ENCODE measurements at regions of chr12 and their contacts with region 1.

Region 1: GRCh38 chr12:118135788-118136558 is at the start of gene PEBP1:
- DNase-seq: peak; percentile 60 to 88
- H3K4me3 ChIP-seq: peak within 1 kb of the TSS; percentile 86 to 97 (median 91)
- H3K27ac ChIP-seq: peak within 1 kb of the TSS; percentile 78
- H3K4me1 ChIP-seq: peaks cover 0 to 3% (median under 1%) of the 10 kb centered on the region in 4 experiments; a peak in 4 of 7 replicates
- H3K27me3 ChIP-seq: no peaks in the 10 kb centered on the region
- CTCF ChIP-seq: 0 out of 4 replicates have a peak, but pooled peaks of 1 of the 3 experiments have one; percentile 6
- EP300 ChIP-seq: no peak
- POLR2A ChIP-seq: peak; percentile 50 to 68
- RAD21 ChIP-seq: no peak
- total RNA-seq, gene PEBP1: 444 and 458 TPM in 2 replicates

Region 2: DNA sequence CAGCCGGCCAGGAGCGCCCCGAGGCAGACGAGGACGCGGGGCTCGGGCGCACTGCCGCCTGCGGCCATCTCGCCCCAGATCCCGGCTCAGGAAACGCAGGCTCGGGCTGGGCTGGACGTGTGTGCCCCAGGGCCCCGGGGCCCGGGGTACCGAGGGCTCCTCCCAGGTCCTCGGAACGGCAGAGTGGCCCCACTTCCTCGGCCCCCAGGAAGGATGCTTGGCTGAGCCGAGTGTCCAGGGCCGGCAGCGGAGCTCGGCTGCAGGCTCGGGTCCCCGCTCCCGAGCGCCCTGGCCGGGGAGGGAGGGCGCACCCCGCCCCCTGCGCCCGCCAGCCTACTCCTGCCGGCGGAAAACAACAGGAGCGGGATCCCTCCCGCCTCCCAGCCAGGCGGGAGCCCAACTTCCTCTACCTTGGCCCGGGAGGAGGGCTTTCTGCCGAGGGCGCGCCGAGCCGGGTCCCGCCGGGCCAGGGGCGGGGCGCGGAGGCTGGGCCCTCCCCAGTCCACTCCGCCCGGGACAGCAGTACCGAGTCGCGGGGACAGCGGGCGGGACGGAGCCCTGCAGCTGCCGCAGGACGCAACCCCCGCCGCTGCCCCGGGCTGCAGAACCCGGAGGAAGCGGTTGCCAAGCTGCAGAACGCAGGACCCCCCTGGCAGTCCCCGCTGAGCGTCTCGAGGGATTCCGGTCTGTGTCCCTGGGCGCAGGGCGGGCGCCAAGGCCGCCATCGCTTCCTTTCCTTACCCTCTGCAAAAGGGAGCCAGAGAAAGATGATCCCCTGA is 32.2 kb before region 1 on chr12 and contains the start of gene VSIG10:
- CTCF ChIA-PET with region 1: interaction called, 3 read pairs
- POLR2A ChIA-PET with region 1: interaction called, 33 read pairs
- DNase-seq: peak in 1 of 2 experiments; percentile 80
- H3K4me3 ChIP-seq: peak within 1 kb of the TSS; percentile 81 to 91 (median 87)
- H3K27ac ChIP-seq: peak within 1 kb of the TSS; percentile 91; the same call in 1 of the 2 replicates
- H3K4me1 ChIP-seq: peaks cover 0 to 9% (median 4%) of the 10 kb centered on the region in 4 experiments; a peak in 4 of 7 replicates
- H3K27me3 ChIP-seq: no peaks in the 10 kb centered on the region
- CTCF ChIP-seq: no peak
- EP300 ChIP-seq: no peak
- POLR2A ChIP-seq: no peak; a peak in 1 of 3 replicates
- RAD21 ChIP-seq: no peak
- total RNA-seq, gene VSIG10: 93.6 and 96.8 TPM in 2 replicates

Region 3: DNA sequence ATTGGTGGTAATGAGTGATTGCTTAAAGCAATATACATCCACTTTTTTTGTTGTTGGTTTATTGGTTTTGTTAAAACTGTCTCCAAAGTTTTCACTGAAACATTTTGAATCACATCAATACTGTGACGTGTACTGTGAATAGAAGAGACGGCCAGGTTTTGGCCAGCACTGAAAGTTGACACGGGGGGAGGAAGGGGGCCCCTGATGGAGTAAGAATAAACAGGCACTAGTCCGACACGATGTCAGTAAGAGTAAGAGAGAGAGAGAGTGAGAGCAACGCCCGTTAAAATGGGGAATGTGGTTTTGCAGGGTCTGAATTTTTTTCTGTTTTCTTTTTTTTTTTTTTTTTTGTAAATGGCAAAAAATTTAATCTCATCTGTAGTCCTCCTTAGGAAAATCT is 14.7 kb after region 1 on chr12:
- CTCF ChIA-PET with region 1: interaction called, 9 read pairs
- POLR2A ChIA-PET with region 1: interaction called, 83 read pairs
- DNase-seq: no peak
- H3K4me3 ChIP-seq: no peak overlapping the region
- H3K27ac ChIP-seq: no peak overlapping the region
- H3K4me1 ChIP-seq: no peaks in the 10 kb centered on the region
- H3K27me3 ChIP-seq: no peaks in the 10 kb centered on the region
- CTCF ChIP-seq: no peak
- EP300 ChIP-seq: no peak
- POLR2A ChIP-seq: no peak
- RAD21 ChIP-seq: no peak

Measured in H1 (cell line).